ENCODE measurements at regions of chr2 and their contacts with region 1.

Region 1: GRCh38 chr2:84865181-84865783 is 15.6 kb downstream of the TRABD2A start:
- DNase-seq: peak; percentile 25
- H3K4me3 Mint-ChIP-seq: no peak overlapping the region
- H3K27ac Mint-ChIP-seq: peak overlapping the region; percentile 77
- H3K4me1 Mint-ChIP-seq: peaks cover 87% of the 10 kb centered on the region
- H3K27me3 Mint-ChIP-seq: no peaks in the 10 kb centered on the region

Region 2: DNA sequence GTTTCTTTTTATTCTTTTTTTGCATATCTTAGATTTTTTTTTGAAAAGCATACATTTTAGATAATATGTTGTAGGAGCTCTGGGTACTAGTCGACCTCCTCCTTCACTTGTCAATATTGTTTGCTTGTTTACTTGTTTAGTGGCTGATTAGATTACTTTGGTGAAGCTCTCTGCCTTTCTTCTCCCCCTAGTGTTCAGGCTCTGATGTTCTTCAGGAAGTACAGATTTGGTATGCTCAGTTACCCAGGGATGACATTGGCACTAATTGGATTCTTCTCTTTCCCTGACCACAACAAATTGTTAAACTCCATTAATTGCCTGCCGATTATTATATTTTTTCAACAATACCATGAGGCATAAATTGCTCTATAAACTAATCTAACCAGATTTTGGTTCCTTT is 897.4 kb before region 1 on chr2:
- CTCF ChIA-PET with region 1: no interaction called
- intact Hi-C with region 1: no loop called
- DNase-seq: no peak
- H3K4me3 Mint-ChIP-seq: no peak overlapping the region
- H3K27ac Mint-ChIP-seq: no peak overlapping the region
- H3K4me1 Mint-ChIP-seq: no peaks in the 10 kb centered on the region
- H3K27me3 Mint-ChIP-seq: peaks cover 19% of the 10 kb centered on the region

Region 3: DNA sequence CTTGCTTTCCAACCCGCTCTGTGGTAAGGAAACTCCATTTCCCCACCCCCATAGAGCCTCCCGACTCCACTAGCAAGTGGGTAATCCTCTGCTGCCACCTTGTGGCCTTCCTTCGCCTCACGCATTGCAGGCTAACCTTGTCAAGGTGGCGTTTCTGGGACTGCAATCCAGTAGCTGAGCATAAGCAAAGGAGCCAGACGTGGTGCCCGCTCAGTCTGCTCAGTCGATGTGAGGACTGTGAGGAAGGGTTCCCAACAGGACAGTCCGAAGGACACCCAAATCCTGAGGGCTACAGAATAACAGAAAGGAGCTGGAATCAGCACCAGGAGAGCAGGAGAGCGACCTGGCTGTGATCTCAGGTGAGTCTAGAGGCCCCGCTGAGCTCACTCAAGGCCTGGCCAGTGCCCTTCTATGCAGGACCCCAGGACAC is 550.4 kb before region 1 on chr2:
- CTCF ChIA-PET with region 1: no interaction called
- intact Hi-C with region 1: loop called (anchors 10 kb)
- DNase-seq: peak; percentile 90
- H3K4me3 Mint-ChIP-seq: no peak overlapping the region
- H3K27ac Mint-ChIP-seq: no peak overlapping the region
- H3K4me1 Mint-ChIP-seq: peaks cover 4% of the 10 kb centered on the region
- H3K27me3 Mint-ChIP-seq: peaks cover 5% of the 10 kb centered on the region

Region 4: DNA sequence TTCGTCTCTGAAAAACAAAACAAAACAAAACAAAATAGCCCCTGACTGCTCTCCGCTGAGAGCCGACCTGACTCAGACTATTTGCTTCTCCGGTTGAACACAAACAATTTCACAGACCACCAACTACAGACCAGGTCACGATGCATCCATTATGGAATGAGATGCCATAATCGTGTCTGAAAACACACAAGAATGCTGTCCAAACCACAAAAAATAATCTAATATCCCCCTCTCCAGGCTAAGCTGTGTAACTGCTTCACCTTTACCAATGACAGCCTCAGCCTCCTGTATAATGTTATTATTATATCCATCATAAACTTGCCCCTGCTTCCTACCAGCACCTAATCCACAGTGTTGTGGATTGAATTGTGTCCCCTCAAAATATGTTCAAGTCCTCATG is 234.2 kb before region 1 on chr2:
- CTCF ChIA-PET with region 1: no interaction called
- intact Hi-C with region 1: loop called (anchors 5 kb)
- DNase-seq: no peak
- H3K4me3 Mint-ChIP-seq: no peak overlapping the region
- H3K27ac Mint-ChIP-seq: no peak overlapping the region
- H3K4me1 Mint-ChIP-seq: peaks cover 12% of the 10 kb centered on the region
- H3K27me3 Mint-ChIP-seq: no peaks in the 10 kb centered on the region

Region 5: GRCh38 chr2:84741296-84741765 is 124.0 kb before region 1 on chr2:
- CTCF ChIA-PET with region 1: interaction called, 9 read pairs
- intact Hi-C with region 1: loop called (anchors 1 kb)
- DNase-seq: peak; percentile 79
- H3K4me3 Mint-ChIP-seq: no peak overlapping the region
- H3K27ac Mint-ChIP-seq: no peak overlapping the region
- H3K4me1 Mint-ChIP-seq: peaks cover 24% of the 10 kb centered on the region
- H3K27me3 Mint-ChIP-seq: no peaks in the 10 kb centered on the region

Region 6: GRCh38 chr2:84832772-84833461 is 32.4 kb before region 1 on chr2:
- CTCF ChIA-PET with region 1: interaction called, 4 read pairs
- intact Hi-C with region 1: loop called (anchors 2 kb)
- DNase-seq: peak; percentile 52
- H3K4me3 Mint-ChIP-seq: peak overlapping the region; percentile 43
- H3K27ac Mint-ChIP-seq: peak overlapping the region; percentile 87
- H3K4me1 Mint-ChIP-seq: peaks cover 33% of the 10 kb centered on the region
- H3K27me3 Mint-ChIP-seq: no peaks in the 10 kb centered on the region

Region 7: DNA sequence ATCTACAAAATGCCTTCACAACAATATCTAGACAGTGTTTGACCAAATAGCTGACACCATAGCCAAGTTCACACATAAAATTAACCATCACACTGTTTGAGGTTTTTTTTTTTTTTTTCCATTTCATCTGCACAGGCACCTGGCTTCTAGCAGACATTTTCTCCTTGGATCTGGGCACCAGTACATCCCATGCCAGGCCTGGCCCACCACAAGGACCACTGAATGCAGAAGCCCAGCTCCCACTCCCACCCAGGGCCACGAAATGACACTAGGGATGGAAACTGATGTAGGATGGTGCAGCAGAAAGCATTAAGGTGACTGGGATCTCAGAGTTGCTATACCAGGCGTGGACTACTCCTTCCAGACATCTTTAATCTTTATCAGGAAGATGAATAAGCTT is 53.1 kb after region 1 on chr2:
- CTCF ChIA-PET with region 1: no interaction called
- intact Hi-C with region 1: no loop called
- DNase-seq: no peak
- H3K4me3 Mint-ChIP-seq: no peak overlapping the region
- H3K27ac Mint-ChIP-seq: peak overlapping the region; percentile 90
- H3K4me1 Mint-ChIP-seq: peaks cover 46% of the 10 kb centered on the region
- H3K27me3 Mint-ChIP-seq: no peaks in the 10 kb centered on the region

Measured in activated naive CD4-positive, alpha-beta T cell treated with anti-CD3 and anti-CD28 coated beads for 36 hours (primary cell).